Posterior cingulate gyrus (tissue), 11 donors: ENCODE measurements at regions of chr7 and their contacts with region 1.

Region 1: DNA sequence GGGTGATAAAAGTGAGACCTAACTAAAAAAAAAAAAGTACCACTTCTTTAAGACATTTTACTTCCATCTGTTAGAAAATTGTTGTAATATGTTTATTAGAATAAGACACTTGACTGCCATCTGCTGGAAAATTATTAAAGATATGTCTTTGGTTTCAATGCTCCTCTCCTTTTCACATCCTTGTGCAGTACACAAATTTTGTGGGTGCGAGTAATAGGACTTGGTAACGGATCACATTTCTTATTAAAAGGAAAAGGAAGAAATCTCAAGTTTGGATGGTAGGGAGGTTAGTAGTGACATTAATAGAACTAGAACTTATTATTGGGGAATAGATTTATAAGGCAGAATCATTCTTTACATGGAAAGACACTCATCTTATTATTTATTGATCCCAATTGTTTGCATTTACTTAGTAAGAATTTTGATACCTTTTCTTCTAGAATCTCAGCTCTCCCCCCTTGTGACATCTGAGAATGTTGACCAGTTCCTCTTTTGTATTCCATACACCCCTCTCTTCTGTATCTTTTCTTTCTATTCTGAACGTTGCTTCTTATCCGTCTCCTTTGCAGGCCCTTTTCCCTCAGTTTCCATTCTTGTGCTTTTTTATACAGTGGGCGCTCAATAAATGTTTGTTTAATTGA is 43.1 kb upstream of the RPA3 start:
- DNase-seq: no peak

Region 2: DNA sequence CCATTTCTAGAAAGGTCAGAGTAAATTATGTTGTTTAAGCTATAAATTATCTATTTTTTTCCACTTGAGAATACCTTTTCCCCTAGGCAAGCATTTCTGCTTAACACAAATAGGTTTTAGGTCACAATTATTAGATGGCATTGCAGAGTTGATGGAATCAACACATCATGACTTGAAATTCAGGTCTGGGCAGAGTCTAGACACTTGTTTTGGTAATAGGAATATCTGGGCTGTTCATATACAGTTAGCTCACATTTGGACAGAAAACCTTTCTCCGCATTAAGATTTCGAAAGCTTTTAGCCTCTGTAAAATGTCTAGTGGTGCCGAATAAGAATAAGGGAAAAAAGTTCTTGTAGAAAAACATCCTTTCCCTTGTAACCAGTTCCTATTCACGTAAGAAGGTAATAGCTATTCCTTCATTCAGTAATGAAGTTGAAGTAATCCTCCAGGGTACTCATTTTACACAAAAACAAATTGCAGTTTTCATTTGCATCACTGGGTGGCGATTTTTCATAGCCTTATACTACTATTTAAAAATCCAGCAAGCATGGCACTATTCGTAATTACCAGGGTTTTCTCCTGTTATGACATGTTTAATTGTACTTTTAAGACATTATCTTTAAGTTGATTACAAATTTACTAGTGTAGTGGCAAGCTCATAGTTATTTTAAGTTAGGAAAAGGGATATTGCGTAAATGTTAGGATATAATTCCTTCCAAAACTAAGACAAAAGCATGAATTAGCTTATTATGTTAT is 80.1 kb before region 1 on chr7:
- intact Hi-C with region 1: loop called (anchors 5 kb)
- DNase-seq: peak in 2 of 10 donors; percentile 21 to 37

Region 3: GRCh38 chr7:7969306-7970236 is 208.1 kb after region 1 on chr7:
- intact Hi-C with region 1: no loop called
- DNase-seq: peak in 8 of 10 donors; percentile 19 to 88 (median 38)